ENCODE measurements at regions of chr13 and their contacts with region 1.

Region 1: GRCh38 chr13:94620286-94620896 is 18.7 kb downstream of the GPR180 start:
- DNase-seq: no peak
- ATAC-seq: no peak
- H3K4me3 ChIP-seq: no peak overlapping the region
- H3K27ac ChIP-seq: no peak overlapping the region
- H3K4me1 ChIP-seq: no peaks in the 10 kb centered on the region
- H3K27me3 ChIP-seq: no peaks in the 10 kb centered on the region
- CTCF ChIP-seq: peak; percentile 36

Region 2: GRCh38 chr13:93413972-93414717 is 1206.2 kb before region 1 on chr13:
- intact Hi-C with region 1: no loop called
- DNase-seq: no peak
- ATAC-seq: no peak
- H3K4me3 ChIP-seq: no peak overlapping the region
- H3K27ac ChIP-seq: no peak overlapping the region
- H3K4me1 ChIP-seq: no peaks in the 10 kb centered on the region
- H3K27me3 ChIP-seq: no peaks in the 10 kb centered on the region
- CTCF ChIP-seq: no peak

Region 3: DNA sequence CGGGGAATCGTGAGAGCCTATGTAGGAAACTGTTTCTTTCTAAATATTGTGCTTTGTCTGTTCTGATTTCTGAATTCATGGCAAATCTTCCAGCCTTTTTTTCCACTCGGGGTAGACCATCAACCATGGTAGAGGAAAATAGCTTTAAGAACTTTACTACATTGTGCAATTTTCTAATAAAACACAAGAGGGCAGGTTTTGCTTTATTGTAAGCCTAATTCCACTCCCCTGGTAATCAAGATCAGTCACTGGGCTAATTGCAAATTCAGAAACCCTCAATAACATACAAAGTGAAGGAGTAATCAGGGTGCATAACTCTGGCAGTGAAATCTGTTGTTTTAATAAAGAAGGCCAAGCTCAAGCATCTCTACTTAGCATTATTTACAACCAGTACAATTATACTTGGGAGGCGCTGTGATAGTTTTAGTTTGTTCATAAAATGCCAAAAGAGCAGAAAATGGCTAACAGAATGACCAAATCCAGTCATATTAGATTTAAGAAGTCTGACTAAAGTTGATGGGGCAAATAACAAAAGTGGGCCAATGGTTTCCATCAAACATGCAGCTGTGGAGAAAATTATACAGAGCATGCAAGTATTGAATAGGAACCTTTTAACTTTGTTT is 184.7 kb before region 1 on chr13:
- intact Hi-C with region 1: loop called (anchors 1 to 5 kb)
- DNase-seq: no peak
- ATAC-seq: peak in 2 of 4 donors; percentile 49 to 80
- H3K4me3 ChIP-seq: no peak overlapping the region
- H3K27ac ChIP-seq: no peak overlapping the region
- H3K4me1 ChIP-seq: no peaks in the 10 kb centered on the region
- H3K27me3 ChIP-seq: no peaks in the 10 kb centered on the region
- CTCF ChIP-seq: peak; percentile 54

Region 4: DNA sequence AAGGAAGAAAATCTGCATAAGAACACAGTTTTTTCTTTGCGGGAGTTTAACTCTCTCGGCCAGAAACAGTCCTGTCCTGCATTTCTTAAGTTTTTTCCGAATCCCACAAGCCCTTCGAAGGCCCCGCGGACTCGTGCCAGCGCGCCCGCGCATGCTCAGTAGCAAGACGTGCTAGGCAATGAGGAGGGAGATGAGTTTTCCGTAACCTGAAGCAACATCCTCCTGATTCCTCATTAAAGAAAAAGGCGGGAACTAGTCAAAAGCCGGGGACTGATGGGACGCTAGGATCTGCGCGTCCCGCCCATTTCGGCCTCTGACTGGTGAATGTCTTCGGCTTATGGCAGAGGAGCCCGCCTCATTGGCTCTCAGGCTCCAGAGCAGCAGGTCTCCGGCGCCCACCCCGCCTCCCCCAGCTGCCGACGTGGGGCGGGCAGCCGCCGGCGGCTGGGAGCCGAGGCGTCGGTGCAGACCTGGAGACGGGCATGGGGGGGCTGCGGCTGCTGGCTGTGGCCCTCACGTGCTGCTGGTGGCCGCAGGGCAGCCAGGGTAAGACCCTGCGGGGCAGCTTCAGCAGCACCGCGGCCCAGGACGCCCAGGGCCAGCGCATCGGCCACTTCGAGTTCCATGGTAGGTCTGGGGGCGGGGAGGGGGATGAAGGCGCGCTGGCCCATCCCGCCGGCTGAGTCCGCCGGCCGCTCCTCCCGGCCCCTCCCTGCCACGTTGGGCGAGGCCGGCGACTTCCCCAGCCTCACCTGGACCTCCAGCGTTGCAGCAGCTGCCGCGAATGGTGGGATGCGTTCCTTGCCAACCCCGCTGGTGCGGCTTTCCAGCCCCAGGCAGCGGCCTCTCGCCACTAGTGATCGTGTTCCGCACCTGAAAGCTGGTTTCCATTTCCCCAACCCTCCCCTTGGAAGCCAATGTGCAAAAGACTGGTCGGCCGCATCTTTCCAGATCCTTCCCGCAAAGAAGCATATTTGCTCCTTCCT is 18.7 kb before region 1 on chr13 and contains the start of gene GPR180:
- intact Hi-C with region 1: no loop called
- DNase-seq: peak; percentile 96 to 97
- ATAC-seq: peak; percentile 99 to 100 (median 99)
- H3K4me3 ChIP-seq: peak within 1 kb of the TSS; percentile 85
- H3K27ac ChIP-seq: peak within 1 kb of the TSS; percentile 72
- H3K4me1 ChIP-seq: no peaks in the 10 kb centered on the region
- H3K27me3 ChIP-seq: no peaks in the 10 kb centered on the region
- CTCF ChIP-seq: no peak
- total RNA-seq, gene GPR180: 3.6 to 4.2 (median 4.2) TPM